CD4-positive, alpha-beta memory T cell (primary cell): ENCODE measurements at regions of chr1 and their contacts with region 1.

Region 1: GRCh38 chr1:32005522-32005921 is 8.1 kb upstream of the KHDRBS1 start:
- DNase-seq: no peak
- H3K4me3 ChIP-seq: no peak overlapping the region
- H3K4me3 Mint-ChIP-seq: no peak overlapping the region
- H3K27ac ChIP-seq: no peak overlapping the region
- H3K27ac Mint-ChIP-seq: peak overlapping the region in 2 of 7 donors; percentile 16 to 71
- H3K4me1 ChIP-seq: peaks cover 3% of the 10 kb centered on the region
- H3K4me1 Mint-ChIP-seq: peaks cover 5 to 9% (median 6%) of the 10 kb centered on the region in 4 donors
- H3K27me3 ChIP-seq: no peaks in the 10 kb centered on the region
- H3K27me3 Mint-ChIP-seq: no peaks in the 10 kb centered on the region

Region 2: GRCh38 chr1:31977385-31978131 is 28.0 kb before region 1 on chr1:
- CTCF ChIA-PET with region 1: interaction called, 17 read pairs
- POLR2A ChIA-PET with region 1: interaction called, 3 read pairs
- intact Hi-C with region 1: no loop called
- DNase-seq: no peak
- H3K4me3 ChIP-seq: no peak overlapping the region
- H3K4me3 Mint-ChIP-seq: no peak overlapping the region
- H3K27ac ChIP-seq: no peak overlapping the region
- H3K27ac Mint-ChIP-seq: peak overlapping the region in 4 of 7 donors; percentile 43 to 68 (median 51)
- H3K4me1 ChIP-seq: peaks cover 20% of the 10 kb centered on the region
- H3K4me1 Mint-ChIP-seq: peaks cover 18 to 26% (median 20%) of the 10 kb centered on the region in 4 donors
- H3K27me3 ChIP-seq: no peaks in the 10 kb centered on the region
- H3K27me3 Mint-ChIP-seq: no peaks in the 10 kb centered on the region

Region 3: DNA sequence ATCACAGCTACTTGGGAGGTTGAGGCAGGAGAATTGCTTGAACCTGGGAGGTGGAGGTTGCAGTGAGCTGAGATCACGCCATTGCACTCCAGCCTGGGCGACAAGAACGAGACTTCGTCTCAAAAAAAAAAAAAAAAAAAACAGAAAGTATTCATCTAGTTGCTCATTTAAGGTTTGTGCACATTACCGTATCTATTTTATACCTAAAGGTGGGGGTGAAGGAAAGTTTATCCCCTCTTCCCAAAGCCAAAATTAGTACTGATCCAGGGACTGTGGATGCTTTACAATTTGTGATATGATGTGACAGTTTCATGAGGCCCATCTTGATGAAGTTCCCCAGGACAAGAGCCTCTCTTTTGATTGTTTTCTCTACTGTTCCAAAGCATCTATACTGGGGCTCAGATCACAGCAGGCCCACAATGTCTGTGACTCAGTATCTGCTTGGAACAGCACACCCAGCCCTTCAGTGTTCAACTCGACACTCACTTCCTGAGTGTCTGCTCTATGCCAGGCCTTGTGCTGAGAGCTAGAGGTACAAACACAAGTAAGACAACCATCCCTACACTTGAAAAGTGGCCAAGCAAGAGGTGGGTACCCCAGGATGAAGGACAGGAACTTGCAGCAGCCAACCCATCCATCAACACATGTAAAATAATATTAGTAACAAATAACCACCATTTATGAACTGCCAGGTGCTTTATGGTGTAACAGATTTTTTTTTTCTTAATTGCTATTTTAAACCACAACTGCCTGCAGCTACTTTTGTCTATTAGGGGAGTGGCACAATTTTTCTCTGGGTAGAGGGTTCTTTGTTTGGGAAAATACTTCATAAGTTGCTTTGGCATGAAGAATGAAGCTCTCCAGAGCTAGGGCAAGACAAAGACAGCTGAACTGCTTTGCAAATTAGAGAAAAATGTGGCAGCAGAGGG is 20.8 kb before region 1 on chr1:
- CTCF ChIA-PET with region 1: interaction called, 17 read pairs
- POLR2A ChIA-PET with region 1: interaction called, 3 read pairs
- intact Hi-C with region 1: no loop called
- DNase-seq: peak in 2 of 5 donors; percentile 20 to 50
- H3K4me3 ChIP-seq: peak overlapping the region in 1 of 2 donors; percentile 21
- H3K4me3 Mint-ChIP-seq: peak overlapping the region in 6 of 8 donors; percentile 45 to 79 (median 57)
- H3K27ac ChIP-seq: peak overlapping the region; percentile 67
- H3K27ac Mint-ChIP-seq: peak overlapping the region; percentile 85 to 97 (median 94)
- H3K4me1 ChIP-seq: peaks cover 61% of the 10 kb centered on the region
- H3K4me1 Mint-ChIP-seq: peaks cover 41 to 71% (median 55%) of the 10 kb centered on the region in 4 donors
- H3K27me3 ChIP-seq: no peaks in the 10 kb centered on the region
- H3K27me3 Mint-ChIP-seq: no peaks in the 10 kb centered on the region

Region 4: GRCh38 chr1:31991182-31991581 is 14.3 kb before region 1 on chr1:
- CTCF ChIA-PET with region 1: interaction called, 20 read pairs
- POLR2A ChIA-PET with region 1: interaction called, 3 read pairs
- intact Hi-C with region 1: no loop called
- DNase-seq: no peak
- H3K4me3 ChIP-seq: no peak overlapping the region
- H3K4me3 Mint-ChIP-seq: no peak overlapping the region
- H3K27ac ChIP-seq: no peak overlapping the region
- H3K27ac Mint-ChIP-seq: peak overlapping the region in 3 of 7 donors; percentile 33 to 72 (median 58)
- H3K4me1 ChIP-seq: peaks cover 14% of the 10 kb centered on the region
- H3K4me1 Mint-ChIP-seq: peaks cover 11 to 31% (median 21%) of the 10 kb centered on the region in 4 donors
- H3K27me3 ChIP-seq: no peaks in the 10 kb centered on the region
- H3K27me3 Mint-ChIP-seq: no peaks in the 10 kb centered on the region

Region 5: GRCh38 chr1:32172621-32173245 is 167.2 kb after region 1 on chr1:
- CTCF ChIA-PET with region 1: no interaction called
- POLR2A ChIA-PET with region 1: no interaction called
- intact Hi-C with region 1: no loop called
- DNase-seq: no peak
- H3K4me3 ChIP-seq: no peak overlapping the region
- H3K4me3 Mint-ChIP-seq: no peak overlapping the region
- H3K27ac ChIP-seq: no peak overlapping the region
- H3K27ac Mint-ChIP-seq: peak overlapping the region; percentile 13 to 85 (median 52)
- H3K4me1 ChIP-seq: peaks cover 13% of the 10 kb centered on the region
- H3K4me1 Mint-ChIP-seq: peaks cover 8 to 12% (median 10%) of the 10 kb centered on the region in 4 donors
- H3K27me3 ChIP-seq: no peaks in the 10 kb centered on the region
- H3K27me3 Mint-ChIP-seq: no peaks in the 10 kb centered on the region